Activated naive CD4-positive, alpha-beta T cell treated with anti-CD3 and anti-CD28 coated beads for 36 hours (primary cell): ENCODE measurements at regions of chr10 and their contacts with region 1.

Region 1: DNA sequence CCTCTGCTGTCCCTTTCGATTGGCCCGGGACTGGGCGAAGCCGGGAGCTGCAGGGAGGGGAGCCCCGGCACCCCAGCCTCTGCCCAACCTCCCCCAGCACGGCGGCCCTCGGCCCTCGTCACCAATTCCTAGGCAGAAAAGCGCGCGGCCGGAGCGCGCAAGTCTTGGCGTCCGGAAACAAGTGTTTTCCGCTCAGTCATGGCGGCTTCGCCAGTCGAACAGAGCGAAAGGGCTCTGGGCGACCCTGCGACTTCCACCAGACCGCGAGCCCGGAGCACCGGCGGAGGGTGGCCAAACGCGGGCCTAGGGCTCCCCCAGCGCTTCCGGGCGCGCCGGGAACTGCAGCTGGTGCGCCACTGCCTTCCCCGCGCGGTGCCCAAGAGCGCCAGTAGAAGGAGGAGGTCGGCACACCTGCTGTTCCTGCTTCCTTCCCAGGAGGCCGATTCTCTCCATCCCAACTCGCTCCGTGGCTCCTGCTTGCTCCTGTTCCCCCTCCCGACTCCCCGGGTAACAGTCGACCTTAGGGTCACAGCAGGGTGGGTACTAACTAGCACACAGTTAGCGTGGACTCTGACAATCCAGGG is 729.9 kb downstream of the ZWINT start:
- DNase-seq: peak; percentile 7
- H3K4me3 Mint-ChIP-seq: no peak overlapping the region
- H3K27ac Mint-ChIP-seq: no peak overlapping the region
- H3K4me1 Mint-ChIP-seq: peaks cover 2% of the 10 kb centered on the region
- H3K27me3 Mint-ChIP-seq: peaks cover 32% of the 10 kb centered on the region

Region 2: DNA sequence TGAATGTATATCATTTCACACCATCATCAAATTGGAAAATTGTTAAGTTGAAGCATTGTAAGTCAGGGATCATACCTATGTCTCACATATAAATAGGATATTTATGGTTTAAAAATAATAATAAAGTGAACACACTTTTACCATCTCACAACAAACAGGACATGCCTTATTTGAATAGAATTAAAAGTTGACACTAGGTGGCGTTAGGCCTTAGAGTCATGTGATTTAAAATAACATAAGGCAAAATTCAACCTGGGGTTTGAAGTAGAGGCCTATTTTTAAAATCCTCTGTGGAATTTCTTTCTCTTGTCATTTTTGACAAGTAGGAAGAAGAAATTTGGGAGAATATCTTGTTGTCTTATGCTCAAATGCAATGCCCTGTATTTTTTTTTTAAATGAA is 645.4 kb before region 1 on chr10:
- CTCF ChIA-PET with region 1: no interaction called
- intact Hi-C with region 1: loop called (anchors 5 kb)
- DNase-seq: no peak
- H3K4me3 Mint-ChIP-seq: no peak overlapping the region
- H3K27ac Mint-ChIP-seq: no peak overlapping the region
- H3K4me1 Mint-ChIP-seq: no peaks in the 10 kb centered on the region
- H3K27me3 Mint-ChIP-seq: no peaks in the 10 kb centered on the region